H1 (cell line): ENCODE measurements at regions of chr5 and their contacts with region 1.

Region 1: GRCh38 chr5:32076699-32077695 is 97.1 kb downstream of the GOLPH3 start:
- DNase-seq: no peak
- H3K4me3 ChIP-seq: no peak overlapping the region
- H3K27ac ChIP-seq: no peak overlapping the region
- H3K4me1 ChIP-seq: no peaks in the 10 kb centered on the region
- H3K27me3 ChIP-seq: no peaks in the 10 kb centered on the region
- CTCF ChIP-seq: peak in 2 of 3 experiments; percentile 65 to 68; a peak in 3 of 4 replicates
- EP300 ChIP-seq: no peak
- POLR2A ChIP-seq: no peak
- RAD21 ChIP-seq: peak; percentile 91 to 92

Region 2: DNA sequence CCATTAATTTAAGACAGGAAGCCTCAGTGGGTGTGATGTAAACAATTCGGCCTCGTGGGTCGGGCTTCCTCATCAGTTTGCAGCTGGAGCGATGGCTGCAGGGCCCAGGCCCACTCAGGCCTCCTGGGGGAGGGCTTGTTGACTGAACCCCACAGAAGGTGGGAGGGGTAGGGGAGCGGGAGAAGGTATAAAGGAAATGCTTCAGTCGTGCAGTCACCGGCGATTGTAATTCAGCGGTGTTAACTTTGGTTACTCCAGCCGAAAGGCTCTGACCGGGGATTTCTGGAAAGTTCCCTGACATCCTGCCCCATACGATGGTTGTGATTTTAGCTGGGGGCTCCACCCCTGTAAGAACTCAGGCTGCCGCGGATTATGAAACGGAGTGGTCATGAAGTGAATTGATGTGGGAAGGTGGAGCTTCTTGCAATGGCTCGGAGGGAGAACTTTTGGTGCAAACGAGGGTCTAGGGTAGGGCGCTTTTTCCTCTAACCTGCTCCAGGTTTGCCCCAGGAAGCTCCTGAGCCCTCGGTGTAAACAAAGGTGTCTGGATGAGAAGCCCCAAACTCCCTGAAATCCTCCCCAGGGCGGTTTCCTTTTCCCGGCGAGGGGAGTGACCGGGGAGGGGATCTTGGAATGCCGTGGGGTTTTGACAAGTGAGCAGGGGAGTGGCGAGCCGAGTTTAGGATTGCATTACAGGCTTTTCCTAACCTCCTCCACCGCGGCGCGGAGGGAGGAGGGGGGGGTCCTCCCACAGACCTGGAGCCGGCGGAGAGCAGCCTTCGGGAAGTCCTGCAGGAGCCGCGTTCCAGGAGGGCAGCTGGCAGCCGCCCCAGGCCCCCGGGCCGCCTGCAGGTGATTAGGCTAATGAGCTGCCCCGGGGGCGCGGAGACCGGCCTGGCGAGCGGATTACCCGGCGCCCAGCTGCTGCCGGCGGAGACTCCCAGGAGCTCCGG is 222.5 kb before region 1 on chr5:
- CTCF ChIA-PET with region 1: interaction called, 20 read pairs
- POLR2A ChIA-PET with region 1: no interaction called
- DNase-seq: peak; percentile 38 to 82
- H3K4me3 ChIP-seq: peak overlapping the region; percentile 54 to 79 (median 70)
- H3K27ac ChIP-seq: 0 out of 2 replicates have a peak overlapping the region, but pooled peaks have one; percentile 31
- H3K4me1 ChIP-seq: peaks cover 2 to 15% (median 10%) of the 10 kb centered on the region in 4 experiments; a peak in 5 of 7 replicates
- H3K27me3 ChIP-seq: no peaks in the 10 kb centered on the region
- CTCF ChIP-seq: no peak
- EP300 ChIP-seq: no peak
- POLR2A ChIP-seq: peak in 1 of 2 experiments; percentile 50; a peak in 2 of 3 replicates
- RAD21 ChIP-seq: no peak

Region 3: DNA sequence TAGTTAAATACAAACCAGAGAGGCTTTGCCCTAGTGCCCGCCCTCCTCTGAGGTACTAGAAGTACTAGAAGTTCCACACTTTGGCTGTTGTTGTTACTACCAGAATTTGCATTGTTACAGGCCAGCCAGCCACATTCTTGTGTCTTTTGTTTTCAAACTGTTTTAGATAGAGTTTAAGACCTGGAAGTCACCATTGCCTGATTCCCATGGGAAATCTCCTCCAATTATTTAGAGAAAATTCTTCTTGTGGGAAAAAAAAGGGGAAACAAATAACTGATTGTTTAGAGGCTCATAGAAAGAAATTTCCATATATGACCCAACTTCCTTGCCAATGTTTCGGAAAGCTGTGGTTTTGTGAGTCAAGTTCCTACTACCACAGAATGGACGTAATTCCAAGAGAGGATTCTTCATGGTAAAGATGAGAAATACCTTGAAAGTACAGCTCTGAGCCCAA is 155.1 kb before region 1 on chr5:
- CTCF ChIA-PET with region 1: interaction called, 26 read pairs
- POLR2A ChIA-PET with region 1: no interaction called
- DNase-seq: peak in 1 of 2 experiments; percentile 13
- H3K4me3 ChIP-seq: no peak overlapping the region
- H3K27ac ChIP-seq: no peak overlapping the region
- H3K4me1 ChIP-seq: no peaks in the 10 kb centered on the region
- H3K27me3 ChIP-seq: no peaks in the 10 kb centered on the region
- CTCF ChIP-seq: no peak
- EP300 ChIP-seq: no peak
- POLR2A ChIP-seq: no peak
- RAD21 ChIP-seq: no peak

Region 4: GRCh38 chr5:32057162-32058096 is 19.6 kb before region 1 on chr5:
- CTCF ChIA-PET with region 1: interaction called, 28 read pairs
- POLR2A ChIA-PET with region 1: no interaction called
- DNase-seq: no peak
- H3K4me3 ChIP-seq: no peak overlapping the region
- H3K27ac ChIP-seq: no peak overlapping the region
- H3K4me1 ChIP-seq: no peaks in the 10 kb centered on the region
- H3K27me3 ChIP-seq: no peaks in the 10 kb centered on the region
- CTCF ChIP-seq: peak in 1 of 3 experiments; percentile 30; a peak in 2 of 4 replicates
- EP300 ChIP-seq: no peak
- POLR2A ChIP-seq: no peak
- RAD21 ChIP-seq: no peak

Region 5: GRCh38 chr5:32066448-32066847 is 10.5 kb before region 1 on chr5:
- CTCF ChIA-PET with region 1: interaction called, 15 read pairs
- POLR2A ChIA-PET with region 1: interaction called, 3 read pairs
- DNase-seq: no peak
- H3K4me3 ChIP-seq: no peak overlapping the region
- H3K27ac ChIP-seq: no peak overlapping the region
- H3K4me1 ChIP-seq: no peaks in the 10 kb centered on the region
- H3K27me3 ChIP-seq: no peaks in the 10 kb centered on the region
- CTCF ChIP-seq: no peak
- EP300 ChIP-seq: no peak
- POLR2A ChIP-seq: no peak
- RAD21 ChIP-seq: no peak

Region 6: GRCh38 chr5:32232441-32233219 is 155.6 kb after region 1 on chr5:
- CTCF ChIA-PET with region 1: no interaction called
- POLR2A ChIA-PET with region 1: no interaction called
- DNase-seq: peak; percentile 19 to 86
- H3K4me3 ChIP-seq: no peak overlapping the region
- H3K27ac ChIP-seq: no peak overlapping the region
- H3K4me1 ChIP-seq: peaks cover 0 to 3% (median 1%) of the 10 kb centered on the region in 4 experiments; a peak in 2 of 7 replicates
- H3K27me3 ChIP-seq: no peaks in the 10 kb centered on the region
- CTCF ChIP-seq: peak; percentile 72 to 87 (median 81)
- EP300 ChIP-seq: no peak
- POLR2A ChIP-seq: no peak
- RAD21 ChIP-seq: peak; percentile 82 to 87